Activated CD8-positive, alpha-beta memory T cell treated with anti-CD3 and anti-CD28 coated beads, Interleukin-2, amount 10 ng/mL, durations not matched to agents 7 days and 5 days (primary cell): ENCODE measurements at regions of chr2 and their contacts with region 1.

Region 1: GRCh38 chr2:199739413-199740110 is 111.4 kb downstream of the FTCDNL1 start:
- DNase-seq: peak; percentile 66
- ATAC-seq: no peak
- H3K4me3 Mint-ChIP-seq: no peak overlapping the region
- H3K27ac Mint-ChIP-seq: no peak overlapping the region
- H3K4me1 Mint-ChIP-seq: peaks cover 2% of the 10 kb centered on the region
- H3K27me3 Mint-ChIP-seq: peaks cover 38% of the 10 kb centered on the region

Region 2: DNA sequence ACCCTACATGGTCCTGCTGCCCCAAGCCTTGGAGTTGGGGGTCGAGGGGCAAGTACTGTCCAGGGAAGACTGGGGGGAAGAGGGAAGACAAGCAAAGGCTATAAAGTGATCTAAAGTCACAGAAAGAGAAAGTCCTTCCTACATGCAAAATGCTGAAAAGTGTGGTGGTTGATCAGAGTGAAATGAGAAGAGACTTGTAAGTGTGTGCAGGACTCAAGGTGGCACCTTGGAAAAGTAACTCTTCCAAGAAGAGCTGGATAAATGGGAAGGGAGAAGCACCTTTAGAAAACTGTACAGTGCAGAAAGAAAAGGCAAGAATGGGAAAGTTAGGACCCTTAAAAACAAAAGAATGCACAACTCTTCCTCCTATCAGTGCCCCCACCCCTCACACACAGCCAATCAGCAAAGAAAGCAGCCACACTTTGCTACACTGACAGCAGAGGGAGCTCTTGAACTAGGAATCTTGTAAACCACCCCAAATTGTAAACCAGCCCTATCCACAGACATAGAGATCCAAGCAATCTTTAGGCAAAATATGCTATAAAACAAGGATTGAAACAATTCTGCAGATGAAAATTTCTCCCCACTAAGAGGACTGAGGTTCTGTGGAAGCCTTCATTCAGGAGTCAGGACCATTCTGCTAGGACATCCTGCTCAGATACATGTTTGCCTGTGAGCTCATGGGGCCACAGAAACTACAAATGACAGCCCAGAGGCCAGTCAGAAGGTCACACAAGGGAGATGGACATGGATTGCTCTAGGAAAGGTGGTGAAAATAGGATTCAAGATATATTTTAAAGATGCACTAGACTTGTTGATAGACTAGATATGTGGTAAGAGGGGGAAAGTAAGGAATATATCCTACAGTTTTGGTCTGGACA is 35.0 kb before region 1 on chr2:
- CTCF ChIA-PET with region 1: interaction called, 24 read pairs
- DNase-seq: peak; percentile 51
- ATAC-seq: peak; percentile 64
- H3K4me3 Mint-ChIP-seq: no peak overlapping the region
- H3K27ac Mint-ChIP-seq: no peak overlapping the region
- H3K4me1 Mint-ChIP-seq: peaks cover 6% of the 10 kb centered on the region
- H3K27me3 Mint-ChIP-seq: peaks cover 11% of the 10 kb centered on the region